Posterior vena cava (tissue), 2 donors: ENCODE measurements at regions of chr7 and their contacts with region 1.

Region 1: DNA sequence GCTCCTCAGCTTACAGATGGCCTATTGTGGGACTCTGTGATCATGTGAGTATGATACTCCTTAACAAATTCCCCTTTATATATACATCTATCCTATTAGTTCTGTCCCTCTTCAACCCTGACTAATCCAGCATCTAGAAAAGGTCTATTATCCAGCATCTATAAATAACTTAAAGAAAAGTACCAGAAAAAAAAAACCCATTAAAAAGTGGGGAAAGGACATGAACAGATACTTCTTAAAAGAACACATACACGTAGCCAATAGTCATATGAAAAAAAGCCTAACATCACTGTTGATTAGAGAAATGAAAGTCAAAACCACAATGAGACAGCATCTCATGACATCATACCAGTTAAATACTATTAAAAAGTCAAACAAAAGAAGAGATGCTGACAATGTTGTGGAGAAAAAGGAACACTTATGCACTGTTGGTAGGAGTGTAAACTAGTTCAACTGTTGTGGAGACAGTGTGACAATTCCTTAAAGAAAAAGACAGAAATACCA is 549.5 kb upstream of the GRM3 start:
- DNase-seq: no peak

Region 2: DNA sequence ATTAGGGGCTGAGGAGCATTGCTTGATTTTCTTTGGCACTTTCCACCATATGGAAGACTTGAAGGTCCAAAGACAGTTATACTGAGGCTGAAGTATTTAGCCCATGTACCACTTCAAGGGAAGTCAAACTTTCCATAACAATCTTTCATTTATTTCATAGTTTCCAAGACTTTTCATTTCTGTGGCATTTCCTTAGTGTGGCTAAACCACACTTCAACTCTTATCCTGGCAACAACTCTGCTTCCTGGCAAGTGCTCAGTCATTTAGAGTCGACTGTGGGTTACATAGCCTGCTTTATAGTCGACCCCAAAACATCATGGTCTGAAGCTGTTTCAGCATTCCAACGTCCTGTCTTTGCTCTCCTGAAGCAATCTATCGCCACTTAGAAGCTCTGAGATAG is 564.4 kb before region 1 on chr7:
- intact Hi-C with region 1: loop called in 1 of 2 experiments (anchors 10 kb)
- DNase-seq: no peak

Region 3: GRCh38 chr7:86123476-86123875 is 29.3 kb after region 1 on chr7:
- intact Hi-C with region 1: no loop called
- DNase-seq: no peak